Heart right ventricle (tissue), 16 donors: ENCODE measurements at regions of chr4 and their contacts with region 1.

Region 1: GRCh38 chr4:110361921-110362320 is 114.0 kb upstream of the ENPEP start:
- DNase-seq: no peak
- ATAC-seq: no peak
- H3K4me3 ChIP-seq: no peak overlapping the region
- H3K27ac ChIP-seq: no peak overlapping the region
- H3K4me1 ChIP-seq: peaks cover 0 to 9% (median 0%) of the 10 kb centered on the region in 9 donors
- H3K27me3 ChIP-seq: no peaks in the 10 kb centered on the region
- CTCF ChIP-seq: no peak

Region 2: GRCh38 chr4:110475881-110476835 is 114.2 kb after region 1 on chr4 and contains the start of gene ENPEP:
- intact Hi-C with region 1: loop called in 4 of 10 experiments (anchors 10 kb)
- DNase-seq: peak; percentile 44 to 60
- ATAC-seq: peak; percentile 71 to 91 (median 82)
- H3K4me3 ChIP-seq: peak within 1 kb of the TSS; percentile 8 to 60 (median 52)
- H3K27ac ChIP-seq: peak within 1 kb of the TSS; percentile 31 to 81 (median 74)
- H3K4me1 ChIP-seq: peaks cover 0 to 14% (median 4%) of the 10 kb centered on the region in 9 donors
- H3K27me3 ChIP-seq: peaks cover 0 to 3% (median 0%) of the 10 kb centered on the region in 7 donors
- CTCF ChIP-seq: no peak
- total RNA-seq, gene ENPEP: 2.2 to 14.9 (median 3.5) TPM

Region 3: DNA sequence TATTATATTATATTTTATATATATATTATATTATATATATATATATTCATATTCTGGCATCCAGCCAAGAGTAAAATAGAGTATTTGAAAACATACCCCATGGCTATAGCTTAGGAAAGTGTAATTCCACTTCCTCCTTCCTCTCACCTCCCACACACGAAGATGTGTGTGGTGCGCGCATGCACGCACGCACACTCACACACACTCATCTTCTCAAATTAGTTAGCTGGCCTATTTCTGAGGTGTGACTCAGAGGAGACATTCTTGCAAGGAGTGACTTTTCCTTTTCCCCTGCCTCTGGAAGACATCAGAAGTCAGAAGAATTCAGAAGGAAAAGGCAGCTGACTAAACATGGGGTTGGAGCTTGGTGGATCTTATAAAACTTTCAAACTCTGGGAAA is 122.8 kb after region 1 on chr4:
- intact Hi-C with region 1: loop called in 4 of 10 experiments (anchors 10 kb)
- DNase-seq: peak in 1 of 2 donors; percentile 8
- ATAC-seq: peak in 6 of 8 donors; percentile 34 to 75 (median 44)
- H3K4me3 ChIP-seq: no peak overlapping the region
- H3K27ac ChIP-seq: peak overlapping the region in 6 of 10 donors; percentile 17 to 57 (median 28)
- H3K4me1 ChIP-seq: peaks cover 0 to 46% (median 20%) of the 10 kb centered on the region in 9 donors
- H3K27me3 ChIP-seq: peaks cover 0 to 3% (median 0%) of the 10 kb centered on the region in 7 donors
- CTCF ChIP-seq: no peak

Region 4: GRCh38 chr4:110631584-110632505 is 269.9 kb after region 1 on chr4:
- intact Hi-C with region 1: no loop called
- DNase-seq: peak; percentile 45 to 52
- ATAC-seq: peak; percentile 85 to 96 (median 94)
- H3K4me3 ChIP-seq: peak overlapping the region in 9 of 10 donors; percentile 1 to 34 (median 23)
- H3K27ac ChIP-seq: no peak overlapping the region
- H3K4me1 ChIP-seq: peaks cover 2 to 36% (median 21%) of the 10 kb centered on the region in 9 donors
- H3K27me3 ChIP-seq: peaks cover 81 to 100% (median 100%) of the 10 kb centered on the region in 7 donors
- CTCF ChIP-seq: peak in 8 of 9 donors; percentile 24 to 72 (median 64)